A673 (cell line): ENCODE measurements at regions of chr3 and their contacts with region 1.

Region 1: GRCh38 chr3:87541723-87542122 is 265.3 kb upstream of the POU1F1 start:
- DNase-seq: no peak
- H3K4me3 ChIP-seq: no peak overlapping the region
- H3K27ac ChIP-seq: no peak overlapping the region
- H3K4me1 ChIP-seq: peaks cover 9% of the 10 kb centered on the region
- H3K27me3 ChIP-seq: no peaks in the 10 kb centered on the region
- CTCF ChIP-seq: no peak

Region 2: GRCh38 chr3:85801955-85802354 is 1739.8 kb before region 1 on chr3:
- CTCF ChIA-PET with region 1: no interaction called
- POLR2A ChIA-PET with region 1: no interaction called
- intact Hi-C with region 1: loop called (anchors 10 kb)
- DNase-seq: peak; percentile 40
- H3K4me3 ChIP-seq: no peak overlapping the region
- H3K27ac ChIP-seq: no peak overlapping the region
- H3K4me1 ChIP-seq: peaks cover 5% of the 10 kb centered on the region
- H3K27me3 ChIP-seq: no peaks in the 10 kb centered on the region
- CTCF ChIP-seq: peak; percentile 54

Region 3: DNA sequence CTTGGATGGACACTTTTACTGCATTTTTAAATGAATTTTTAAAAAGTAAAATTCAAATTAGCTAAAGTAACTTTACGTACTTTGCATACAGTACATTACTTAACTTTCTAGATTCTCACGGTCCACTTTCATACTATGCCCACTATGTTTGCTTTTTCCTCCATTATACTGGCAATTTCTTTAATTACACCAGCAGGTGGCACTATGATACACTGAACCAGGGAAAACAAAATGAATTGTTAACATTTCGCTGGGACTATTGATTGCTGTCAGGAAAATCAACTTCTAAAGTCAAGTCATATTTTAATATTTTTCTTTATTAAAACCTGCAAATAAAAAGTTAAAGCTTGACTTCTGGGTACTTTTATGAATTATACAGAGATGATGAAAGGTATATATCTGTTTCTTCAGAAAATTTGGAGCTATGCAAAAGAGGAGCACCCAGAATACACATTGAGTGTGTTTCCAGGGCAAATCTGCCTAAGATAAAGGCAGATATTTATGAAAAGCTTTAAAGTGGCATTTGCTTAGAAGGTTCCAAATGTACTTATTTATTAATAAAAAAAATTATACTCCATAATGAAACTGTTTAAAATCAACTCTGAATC is 243.5 kb before region 1 on chr3:
- CTCF ChIA-PET with region 1: no interaction called
- POLR2A ChIA-PET with region 1: no interaction called
- intact Hi-C with region 1: loop called (anchors 5 kb)
- DNase-seq: peak; percentile 84
- H3K4me3 ChIP-seq: no peak overlapping the region
- H3K27ac ChIP-seq: peak overlapping the region; percentile 17
- H3K4me1 ChIP-seq: peaks cover 43% of the 10 kb centered on the region
- H3K27me3 ChIP-seq: no peaks in the 10 kb centered on the region
- CTCF ChIP-seq: peak; percentile 85

Region 4: DNA sequence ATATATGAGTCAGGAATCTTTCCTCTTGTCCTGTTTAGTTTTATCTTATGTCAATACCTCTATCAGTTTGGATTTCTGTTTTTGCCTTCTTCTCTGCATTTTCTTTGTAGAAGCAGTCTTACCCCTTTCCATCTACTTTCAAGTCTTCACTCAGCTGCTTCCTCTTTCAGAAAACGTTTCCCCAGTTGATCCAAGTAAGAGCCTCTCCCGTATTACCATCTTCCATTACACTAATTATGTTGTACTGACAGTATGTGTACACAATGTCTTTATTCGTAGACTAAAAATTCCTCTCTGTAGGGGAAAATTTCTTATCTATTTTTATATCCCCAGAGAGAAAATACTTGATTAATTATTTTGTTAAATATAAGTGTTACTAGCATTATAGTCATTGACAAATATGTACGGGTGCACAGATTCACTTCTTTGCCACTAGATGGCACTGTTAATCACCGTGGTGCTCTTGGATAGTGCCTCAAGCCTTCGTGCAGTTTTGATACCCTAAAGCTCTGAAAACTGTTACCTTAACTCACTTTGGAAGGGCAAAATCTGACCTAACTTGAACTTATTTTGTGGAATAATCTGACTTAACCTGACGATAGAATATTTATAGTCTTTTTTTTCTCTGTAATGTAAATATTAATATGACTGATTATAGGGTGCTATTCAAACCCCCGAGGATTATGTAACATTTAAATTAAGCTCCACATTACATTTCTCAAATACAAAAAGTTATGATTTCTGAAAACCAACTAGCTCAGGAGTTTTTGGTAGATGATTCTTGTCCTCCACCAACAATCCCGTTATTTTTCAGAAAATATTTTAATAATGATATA is 191.1 kb before region 1 on chr3:
- CTCF ChIA-PET with region 1: no interaction called
- POLR2A ChIA-PET with region 1: no interaction called
- intact Hi-C with region 1: loop called (anchors 5 kb)
- DNase-seq: peak; percentile 79
- H3K4me3 ChIP-seq: no peak overlapping the region
- H3K27ac ChIP-seq: peak overlapping the region; percentile 50
- H3K4me1 ChIP-seq: peaks cover 19% of the 10 kb centered on the region
- H3K27me3 ChIP-seq: no peaks in the 10 kb centered on the region
- CTCF ChIP-seq: peak; percentile 96

Region 5: GRCh38 chr3:87390821-87391220 is 150.9 kb before region 1 on chr3:
- CTCF ChIA-PET with region 1: no interaction called
- POLR2A ChIA-PET with region 1: no interaction called
- intact Hi-C with region 1: no loop called
- DNase-seq: no peak
- H3K4me3 ChIP-seq: no peak overlapping the region
- H3K27ac ChIP-seq: no peak overlapping the region
- H3K4me1 ChIP-seq: no peaks in the 10 kb centered on the region
- H3K27me3 ChIP-seq: no peaks in the 10 kb centered on the region
- CTCF ChIP-seq: no peak